Right lobe of liver (tissue), 6 donors: ENCODE measurements at regions of chr1 and their contacts with region 1.

Region 1: GRCh38 chr1:229661022-229661877 is 35.2 kb downstream of the URB2 start:
- DNase-seq: peak; percentile 73 to 81 (median 74)
- ATAC-seq: peak; percentile 92 to 99 (median 98)
- H3K4me3 ChIP-seq: no peak overlapping the region
- H3K27ac ChIP-seq: no peak overlapping the region
- H3K4me1 ChIP-seq: peaks cover 0 to 3% (median 0%) of the 10 kb centered on the region in 4 donors
- H3K27me3 ChIP-seq: no peaks in the 10 kb centered on the region
- CTCF ChIP-seq: peak; percentile 84 to 88 (median 85)
- POLR2A ChIP-seq: no peak

Region 2: DNA sequence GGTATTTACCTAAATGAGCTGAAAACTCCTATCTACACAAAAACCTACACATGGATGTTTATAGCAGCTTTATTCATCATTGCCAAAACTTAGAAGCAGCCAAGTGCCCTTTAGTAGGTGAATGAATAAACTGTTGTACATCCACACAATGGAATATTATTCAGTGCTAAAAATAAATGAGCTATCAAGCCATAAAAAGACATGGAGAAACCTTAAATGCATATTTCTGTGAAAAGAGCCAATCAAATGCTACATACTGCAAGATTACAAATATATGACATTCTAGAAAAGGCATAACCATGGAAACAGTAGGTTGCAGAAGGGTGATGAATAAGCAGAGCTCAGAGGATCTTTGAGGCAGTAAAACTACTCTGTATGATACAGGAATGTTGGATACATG is 126.0 kb before region 1 on chr1:
- intact Hi-C with region 1: no loop called
- DNase-seq: no peak
- ATAC-seq: no peak
- H3K4me3 ChIP-seq: no peak overlapping the region
- H3K27ac ChIP-seq: no peak overlapping the region
- H3K4me1 ChIP-seq: peaks cover 0 to 3% (median 0%) of the 10 kb centered on the region in 4 donors
- H3K27me3 ChIP-seq: no peaks in the 10 kb centered on the region
- CTCF ChIP-seq: no peak
- POLR2A ChIP-seq: no peak

Region 3: DNA sequence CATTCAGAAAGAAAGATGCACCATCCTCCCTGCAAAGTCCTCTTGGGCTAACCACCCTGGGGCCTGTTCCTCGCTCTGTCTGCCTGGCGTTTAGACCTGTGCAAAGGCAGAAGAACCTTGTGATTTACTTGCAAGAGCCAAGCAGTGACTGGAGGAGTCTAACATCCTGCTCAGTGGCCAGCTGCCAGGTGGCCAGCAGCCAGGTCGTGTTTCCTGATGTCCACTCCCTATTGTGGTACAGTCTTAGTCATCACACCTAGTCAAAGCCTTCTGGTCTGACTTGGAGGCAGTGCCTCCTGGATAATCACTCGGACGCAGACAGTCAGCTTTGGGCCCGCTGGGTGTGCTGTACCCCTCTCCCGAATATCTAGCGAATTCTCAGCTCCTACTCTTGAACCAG is 646.8 kb after region 1 on chr1:
- intact Hi-C with region 1: loop called in 1 of 2 experiments (anchors 5 kb)
- DNase-seq: peak in 1 of 3 donors; percentile 72
- ATAC-seq: peak in 2 of 4 donors; percentile 43 to 48
- H3K4me3 ChIP-seq: no peak overlapping the region
- H3K27ac ChIP-seq: no peak overlapping the region
- H3K4me1 ChIP-seq: peaks cover 0 to 11% (median 0%) of the 10 kb centered on the region in 4 donors
- H3K27me3 ChIP-seq: no peaks in the 10 kb centered on the region
- CTCF ChIP-seq: no peak
- POLR2A ChIP-seq: no peak